B cell (primary cell): ENCODE measurements at regions of chr3 and their contacts with region 1.

Region 1: DNA sequence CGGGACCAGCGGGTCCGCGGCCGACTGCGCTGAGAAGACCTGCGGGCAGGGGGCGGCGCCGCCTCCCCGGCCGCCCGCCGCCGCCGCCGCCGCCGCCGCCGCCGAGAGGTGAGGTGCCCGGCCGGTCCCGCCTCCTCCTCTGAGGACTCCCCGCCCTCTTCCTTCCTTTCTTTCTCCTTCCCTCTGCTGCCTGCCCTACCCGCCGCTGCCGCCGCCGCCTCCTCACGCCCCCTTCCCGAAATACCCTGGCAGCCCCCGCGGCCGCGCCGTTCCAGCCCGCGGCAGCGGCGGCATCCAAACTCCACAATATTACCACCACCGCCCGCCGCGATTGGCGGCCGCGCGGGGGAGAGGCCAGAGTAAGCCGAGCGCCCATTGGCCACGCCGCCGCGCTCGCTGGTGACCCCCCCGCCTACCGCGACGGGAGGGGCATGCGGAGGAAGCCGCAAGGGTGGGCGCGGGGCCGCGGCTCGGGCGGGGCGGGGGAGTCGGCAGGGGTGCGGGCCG is 61.8 kb upstream of the ANKRD28 start:
- DNase-seq: peak; percentile 86
- ATAC-seq: peak; percentile 76
- H3K4me3 ChIP-seq: peak overlapping the region in 4 of 5 experiments; percentile 66 to 87 (median 81)
- H3K4me3 Mint-ChIP-seq: peak overlapping the region; percentile 86
- H3K27ac ChIP-seq: peak overlapping the region; percentile 73 to 87
- H3K27ac Mint-ChIP-seq: peak overlapping the region; percentile 97
- H3K4me1 ChIP-seq: peaks cover 10 to 16% of the 10 kb centered on the region in 2 donors
- H3K4me1 Mint-ChIP-seq: peaks cover 24% of the 10 kb centered on the region
- H3K27me3 ChIP-seq: no peaks in the 10 kb centered on the region
- H3K27me3 Mint-ChIP-seq: no peaks in the 10 kb centered on the region
- CTCF ChIP-seq: no peak

Region 2: GRCh38 chr3:15797642-15798303 is 61.8 kb before region 1 on chr3 and contains the start of gene ANKRD28:
- CTCF ChIA-PET with region 1: no interaction called
- POLR2A ChIA-PET with region 1: no interaction called
- intact Hi-C with region 1: loop called (anchors 5 kb)
- DNase-seq: peak; percentile 57
- ATAC-seq: no peak
- H3K4me3 ChIP-seq: peak within 1 kb of the TSS in 3 of 5 experiments; percentile 18 to 52 (median 50)
- H3K4me3 Mint-ChIP-seq: peak within 1 kb of the TSS; percentile 70
- H3K27ac ChIP-seq: peak within 1 kb of the TSS; percentile 47 to 91
- H3K27ac Mint-ChIP-seq: peak within 1 kb of the TSS; percentile 64
- H3K4me1 ChIP-seq: peaks cover 33 to 39% of the 10 kb centered on the region in 2 donors
- H3K4me1 Mint-ChIP-seq: peaks cover 68% of the 10 kb centered on the region
- H3K27me3 ChIP-seq: no peaks in the 10 kb centered on the region
- H3K27me3 Mint-ChIP-seq: no peaks in the 10 kb centered on the region
- CTCF ChIP-seq: no peak
- total RNA-seq, gene ANKRD28: 37.4 and 45.7 TPM in 2 replicates